ENCODE measurements at regions of chr18 and their contacts with region 1.

Region 1: GRCh38 chr18:2741651-2742050 is 86.1 kb downstream of the SMCHD1 start:
- DNase-seq: no peak
- ATAC-seq: no peak
- H3K4me3 ChIP-seq: no peak overlapping the region
- H3K27ac ChIP-seq: no peak overlapping the region
- H3K4me1 ChIP-seq: no peaks in the 10 kb centered on the region
- H3K27me3 ChIP-seq: no peaks in the 10 kb centered on the region
- CTCF ChIP-seq: no peak

Region 2: DNA sequence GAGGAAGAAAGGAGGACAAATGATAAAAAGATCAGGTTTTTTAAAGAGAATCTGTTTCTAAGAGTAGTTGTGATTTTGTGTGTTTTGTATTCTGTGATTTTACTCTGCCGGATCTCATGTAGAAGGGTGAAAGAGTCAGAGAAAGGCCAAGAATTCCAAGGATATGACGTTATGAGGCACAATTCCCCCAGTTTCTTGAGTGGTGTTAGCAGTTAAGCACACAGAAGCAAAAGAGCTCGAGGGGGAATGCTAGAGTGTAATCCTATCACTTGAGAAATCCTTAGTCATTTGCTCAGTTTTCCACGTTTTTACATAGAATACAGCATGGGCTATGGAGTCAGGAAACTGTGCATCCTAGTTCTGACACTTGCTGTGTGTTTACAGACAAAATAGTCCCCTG is 205.2 kb before region 1 on chr18:
- CTCF ChIA-PET with region 1: no interaction called
- POLR2A ChIA-PET with region 1: no interaction called
- intact Hi-C with region 1: no loop called
- DNase-seq: peak; percentile 18
- ATAC-seq: peak; percentile 24; the same call in 1 of the 2 replicates
- H3K4me3 ChIP-seq: no peak overlapping the region
- H3K27ac ChIP-seq: no peak overlapping the region
- H3K4me1 ChIP-seq: peaks cover 16% of the 10 kb centered on the region; the same call in 1 of the 2 replicates
- H3K27me3 ChIP-seq: no peaks in the 10 kb centered on the region
- CTCF ChIP-seq: no peak

Region 3: DNA sequence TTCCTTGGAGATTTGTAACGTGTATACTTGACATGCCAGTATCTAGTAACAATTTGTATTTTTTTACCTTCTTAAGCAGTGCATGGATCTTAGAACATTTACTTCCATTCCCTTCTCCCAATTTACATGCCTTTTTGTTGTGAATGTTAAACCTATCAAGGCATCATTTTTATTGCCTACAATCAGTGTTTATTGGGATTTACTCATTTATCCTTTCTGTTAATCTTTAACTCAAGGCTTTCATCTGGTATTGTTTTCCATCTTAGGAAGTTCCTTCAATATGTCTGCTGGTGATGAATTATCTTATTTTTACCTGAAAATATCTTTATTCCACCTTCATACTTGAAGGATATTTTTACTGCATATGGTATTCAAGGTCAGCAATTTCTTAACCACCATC is 16.7 kb after region 1 on chr18:
- CTCF ChIA-PET with region 1: no interaction called
- POLR2A ChIA-PET with region 1: no interaction called
- intact Hi-C with region 1: loop called (anchors 1 kb)
- DNase-seq: no peak
- ATAC-seq: no peak
- H3K4me3 ChIP-seq: no peak overlapping the region
- H3K27ac ChIP-seq: no peak overlapping the region
- H3K4me1 ChIP-seq: no peaks in the 10 kb centered on the region
- H3K27me3 ChIP-seq: no peaks in the 10 kb centered on the region
- CTCF ChIP-seq: no peak

Region 4: GRCh38 chr18:2948038-2948437 is 206.4 kb after region 1 on chr18:
- CTCF ChIA-PET with region 1: interaction called, 15 read pairs
- POLR2A ChIA-PET with region 1: no interaction called
- intact Hi-C with region 1: no loop called
- DNase-seq: peak; percentile 36
- ATAC-seq: peak; percentile 63
- H3K4me3 ChIP-seq: no peak overlapping the region
- H3K27ac ChIP-seq: no peak overlapping the region
- H3K4me1 ChIP-seq: no peaks in the 10 kb centered on the region
- H3K27me3 ChIP-seq: no peaks in the 10 kb centered on the region
- CTCF ChIP-seq: peak; percentile 71

Measured in PC-3 (cell line).